A549 (cell line): ENCODE measurements at regions of chr14 and their contacts with region 1.

Region 1: DNA sequence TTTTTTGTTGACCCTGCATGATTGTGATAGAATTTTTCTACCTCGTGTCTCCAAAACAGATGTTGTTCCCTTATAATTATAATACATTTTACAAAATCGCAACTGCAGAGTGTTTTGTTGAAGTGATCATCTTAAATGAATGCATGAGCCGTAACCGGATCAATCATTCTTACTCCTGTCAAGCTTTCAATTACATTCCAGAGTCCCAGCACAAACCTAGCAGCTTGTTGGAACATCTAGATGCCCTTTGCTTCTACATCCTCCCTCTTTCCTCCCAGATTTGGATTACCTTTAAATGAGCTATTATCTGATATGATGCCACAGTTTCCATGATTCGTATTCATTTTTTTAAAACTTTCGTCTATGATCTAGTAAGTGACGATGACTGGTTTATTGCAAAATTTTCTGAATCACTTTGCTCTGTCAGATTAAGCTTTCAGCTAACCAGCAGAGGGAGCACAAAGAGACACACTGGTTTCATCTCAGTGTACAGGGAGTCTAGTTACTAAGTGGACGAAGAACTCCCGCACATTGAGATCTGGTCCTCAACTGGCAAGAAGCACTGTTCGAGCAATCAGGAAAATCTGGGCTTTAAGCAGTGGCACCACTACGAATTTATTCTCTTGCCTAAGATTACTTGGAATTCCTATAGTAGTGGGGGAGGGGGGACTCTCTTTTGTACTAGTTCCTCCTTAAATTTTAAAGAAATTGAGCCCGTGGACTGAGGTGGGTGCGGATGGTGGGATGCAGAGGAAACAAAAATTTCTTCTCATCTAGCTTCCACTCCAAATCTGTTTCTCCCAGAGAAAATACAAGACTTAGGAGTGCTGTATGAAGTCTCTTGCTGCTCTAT is 40.9 kb downstream of the TSHR start:
- DNase-seq: peak; percentile 65 to 78
- ATAC-seq: peak; percentile 94 to 99
- H3K4me3 ChIP-seq: no peak overlapping the region
- H3K27ac ChIP-seq: no peak overlapping the region
- H3K4me1 ChIP-seq: 0 out of 3 replicates have a peak, but pooled peaks cover 3% of the 10 kb centered on the region
- CTCF ChIP-seq: peak; percentile 76
- EP300 ChIP-seq: no peak
- POLR2A ChIP-seq: no peak
- RAD21 ChIP-seq: peak; percentile 55 to 60

Region 2: GRCh38 chr14:80726211-80726610 is 270.1 kb before region 1 on chr14:
- CTCF ChIA-PET with region 1: no interaction called
- POLR2A ChIA-PET with region 1: no interaction called
- DNase-seq: no peak
- ATAC-seq: no peak
- H3K4me3 ChIP-seq: no peak overlapping the region
- H3K27ac ChIP-seq: no peak overlapping the region
- H3K4me1 ChIP-seq: no peaks in the 10 kb centered on the region
- CTCF ChIP-seq: no peak
- EP300 ChIP-seq: no peak
- POLR2A ChIP-seq: no peak
- RAD21 ChIP-seq: no peak

Region 3: GRCh38 chr14:81033698-81034240 is 37.5 kb after region 1 on chr14:
- CTCF ChIA-PET with region 1: interaction called, 16 read pairs
- POLR2A ChIA-PET with region 1: no interaction called
- DNase-seq: no peak
- ATAC-seq: no peak
- H3K4me3 ChIP-seq: no peak overlapping the region
- H3K27ac ChIP-seq: no peak overlapping the region
- H3K4me1 ChIP-seq: no peaks in the 10 kb centered on the region
- CTCF ChIP-seq: no peak
- EP300 ChIP-seq: no peak
- POLR2A ChIP-seq: no peak
- RAD21 ChIP-seq: no peak

Region 4: DNA sequence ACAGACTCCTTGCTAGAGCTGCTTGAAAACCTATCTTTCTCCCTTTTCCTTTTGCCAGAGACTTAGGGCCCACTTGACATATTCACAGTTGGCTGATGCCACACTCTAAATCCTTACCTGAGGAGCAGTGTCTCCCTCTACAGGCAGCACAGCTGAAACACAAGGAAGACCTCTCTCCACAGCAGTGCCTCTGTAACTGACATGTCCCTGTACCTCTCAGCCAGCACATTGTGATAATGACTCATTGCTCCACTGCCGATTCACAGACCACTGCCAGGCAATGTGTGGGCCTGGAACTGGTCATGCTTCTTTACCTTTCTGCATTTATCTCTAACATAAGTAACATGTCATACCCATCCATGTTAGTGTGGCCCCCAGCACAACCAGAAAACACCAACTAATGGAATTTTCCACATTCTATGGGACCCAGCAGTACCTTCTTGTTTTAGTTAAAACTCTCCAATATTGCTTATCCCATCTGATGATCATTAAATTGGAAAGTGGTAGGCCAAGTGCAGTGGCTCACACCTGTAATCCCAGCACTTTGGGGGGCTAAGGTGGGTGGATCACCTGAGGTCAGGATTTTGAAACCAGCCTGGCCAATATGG is 168.0 kb after region 1 on chr14:
- CTCF ChIA-PET with region 1: interaction called, 54 read pairs
- POLR2A ChIA-PET with region 1: no interaction called
- DNase-seq: peak; percentile 55 to 82
- ATAC-seq: peak; percentile 90 to 96
- H3K4me3 ChIP-seq: no peak overlapping the region
- H3K27ac ChIP-seq: no peak overlapping the region
- H3K4me1 ChIP-seq: peaks cover 4% of the 10 kb centered on the region; the same call in 1 of the 3 replicates
- CTCF ChIP-seq: peak; percentile 49
- EP300 ChIP-seq: no peak
- POLR2A ChIP-seq: no peak
- RAD21 ChIP-seq: peak; percentile 53 to 64

Region 5: DNA sequence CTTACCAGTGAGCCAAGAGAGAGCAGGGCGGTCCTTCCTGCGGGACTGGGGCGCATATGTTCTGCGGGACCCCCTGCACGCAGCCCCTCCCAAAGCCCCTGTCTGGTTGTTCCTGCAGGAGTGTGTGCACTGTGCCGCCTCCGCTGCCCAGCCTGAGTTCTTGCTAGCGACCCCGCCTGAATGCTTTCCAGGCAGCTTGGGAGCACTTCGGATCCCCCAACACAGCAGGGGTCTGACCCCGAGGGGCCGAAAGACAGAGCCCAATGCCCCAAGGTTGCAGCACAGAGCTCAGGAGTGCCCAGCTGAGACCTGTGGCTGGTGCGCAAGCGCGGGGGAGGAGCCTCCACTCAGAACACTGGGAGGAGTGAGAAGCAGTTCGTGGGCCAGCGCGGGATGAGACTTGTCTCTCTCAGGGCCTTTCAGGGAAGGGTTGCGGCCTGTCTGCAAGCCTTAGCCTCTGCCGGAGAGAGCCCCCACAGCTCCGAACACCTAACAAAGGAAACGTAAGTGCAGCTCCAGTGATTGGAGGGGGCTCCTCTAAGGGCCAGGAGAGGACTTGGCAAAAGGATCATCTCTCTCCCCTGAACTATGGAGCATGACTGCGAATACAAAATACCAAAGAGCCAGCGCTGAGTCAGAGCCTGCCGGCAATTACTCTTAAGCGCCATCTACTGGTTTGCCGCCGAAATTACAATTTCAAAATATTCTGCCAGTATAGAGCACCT is 174.0 kb after region 1 on chr14:
- CTCF ChIA-PET with region 1: interaction called, 54 read pairs
- POLR2A ChIA-PET with region 1: interaction called, 9 read pairs
- DNase-seq: peak; percentile 89 to 91
- ATAC-seq: peak; percentile 100
- H3K4me3 ChIP-seq: peak overlapping the region; percentile 62
- H3K27ac ChIP-seq: peak overlapping the region; percentile 82 to 92
- H3K4me1 ChIP-seq: 0 out of 3 replicates have a peak, but pooled peaks cover 2% of the 10 kb centered on the region
- CTCF ChIP-seq: peak; percentile 89
- EP300 ChIP-seq: no peak
- POLR2A ChIP-seq: peak; percentile 94
- RAD21 ChIP-seq: peak; percentile 67 to 72

Region 6: GRCh38 chr14:81211844-81212243 is 215.6 kb after region 1 on chr14:
- CTCF ChIA-PET with region 1: interaction called, 10 read pairs
- POLR2A ChIA-PET with region 1: no interaction called
- DNase-seq: peak in 1 of 2 experiments; percentile 37
- ATAC-seq: peak; percentile 70 to 78; a peak in 4 of 6 replicates
- H3K4me3 ChIP-seq: no peak overlapping the region
- H3K27ac ChIP-seq: no peak overlapping the region
- H3K4me1 ChIP-seq: no peaks in the 10 kb centered on the region
- CTCF ChIP-seq: peak; percentile 40
- EP300 ChIP-seq: no peak
- POLR2A ChIP-seq: no peak
- RAD21 ChIP-seq: peak; percentile 50 to 53; a peak in 4 of 5 replicates